PC-9 (cell line): ENCODE measurements at regions of chr6 and their contacts with region 1.

Region 1: DNA sequence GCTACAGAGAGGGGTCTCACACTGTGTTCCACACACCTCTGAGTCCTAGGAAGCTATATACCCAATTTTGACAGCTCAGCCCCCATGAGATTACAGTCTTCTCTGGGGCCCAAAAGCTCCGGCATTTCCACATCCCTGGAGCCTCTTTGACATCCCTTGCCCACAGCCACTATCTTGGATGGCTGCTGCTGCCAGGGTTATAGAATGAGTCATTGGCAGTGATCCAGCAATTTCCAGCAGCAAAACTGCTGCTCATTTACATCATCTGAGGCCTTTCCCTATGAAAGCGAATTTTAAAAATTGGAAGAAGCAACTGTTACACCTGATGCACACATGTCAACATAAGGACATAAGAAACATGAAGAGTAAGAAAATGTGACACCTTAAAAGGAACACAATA is 590.7 kb downstream of the MEI4 start:
- DNase-seq: peak in 1 of 2 experiments; percentile 5
- H3K4me3 ChIP-seq: no peak overlapping the region
- H3K27ac ChIP-seq: no peak overlapping the region
- H3K4me1 ChIP-seq: no peaks in the 10 kb centered on the region
- H3K27me3 ChIP-seq: no peaks in the 10 kb centered on the region
- CTCF ChIP-seq: no peak

Region 2: DNA sequence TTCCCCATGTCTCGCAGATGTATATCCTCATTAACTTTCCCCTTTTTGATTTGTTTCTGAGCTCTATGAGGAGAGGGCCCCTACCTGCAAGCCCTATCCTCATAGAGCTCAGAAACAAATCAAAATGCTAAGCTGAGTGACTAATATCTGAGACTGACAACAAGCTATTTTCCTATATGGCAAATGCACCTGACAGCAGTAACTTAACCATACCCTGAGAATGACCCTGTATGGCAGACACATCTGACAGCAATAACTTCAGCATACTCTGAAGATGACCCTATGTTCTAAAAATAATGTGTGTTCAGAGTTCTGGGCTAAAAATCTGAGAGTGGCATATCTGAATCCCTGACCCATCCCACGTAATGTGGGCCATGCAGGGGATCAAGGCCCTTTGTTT is 669.7 kb before region 1 on chr6:
- CTCF ChIA-PET with region 1: interaction called, 10 read pairs
- POLR2A ChIA-PET with region 1: no interaction called
- intact Hi-C with region 1: no loop called
- DNase-seq: no peak
- H3K4me3 ChIP-seq: no peak overlapping the region
- H3K27ac ChIP-seq: no peak overlapping the region
- H3K4me1 ChIP-seq: no peaks in the 10 kb centered on the region
- H3K27me3 ChIP-seq: no peaks in the 10 kb centered on the region
- CTCF ChIP-seq: no peak

Region 3: GRCh38 chr6:78222226-78222625 is 21.3 kb before region 1 on chr6:
- CTCF ChIA-PET with region 1: no interaction called
- POLR2A ChIA-PET with region 1: no interaction called
- intact Hi-C with region 1: no loop called
- DNase-seq: no peak
- H3K4me3 ChIP-seq: no peak overlapping the region
- H3K27ac ChIP-seq: no peak overlapping the region
- H3K4me1 ChIP-seq: no peaks in the 10 kb centered on the region
- H3K27me3 ChIP-seq: no peaks in the 10 kb centered on the region
- CTCF ChIP-seq: no peak

Region 4: DNA sequence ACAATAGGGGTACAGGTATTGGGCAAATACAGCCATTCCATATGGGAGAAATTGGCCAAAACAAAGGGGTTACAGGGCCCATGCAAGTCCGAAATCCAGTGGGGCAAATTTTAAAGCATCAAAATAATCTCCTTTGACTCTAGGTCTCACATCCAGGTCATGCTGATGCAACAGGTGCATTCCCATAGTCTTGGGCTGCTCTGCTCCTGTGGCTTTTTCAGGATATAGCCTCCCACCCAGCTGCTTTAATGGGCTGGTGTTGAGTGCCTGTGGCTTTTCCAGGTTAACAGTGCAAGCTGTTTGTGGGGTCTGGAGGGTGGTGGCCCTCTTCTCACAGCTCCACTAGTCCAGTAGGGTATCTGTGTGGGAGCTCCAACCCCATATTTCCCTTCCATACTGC is 16.4 kb after region 1 on chr6:
- CTCF ChIA-PET with region 1: no interaction called
- POLR2A ChIA-PET with region 1: interaction called, 10 read pairs
- intact Hi-C with region 1: no loop called
- DNase-seq: no peak
- H3K4me3 ChIP-seq: no peak overlapping the region
- H3K27ac ChIP-seq: no peak overlapping the region
- H3K4me1 ChIP-seq: no peaks in the 10 kb centered on the region
- H3K27me3 ChIP-seq: no peaks in the 10 kb centered on the region
- CTCF ChIP-seq: no peak